Mammary epithelial cell (primary cell): ENCODE measurements at regions of chr3 and their contacts with region 1.

Region 1: GRCh38 chr3:50227390-50228183 is 8.4 kb upstream of the GNAI2 start:
- DNase-seq: peak; percentile 96
- H3K4me3 ChIP-seq: peak overlapping the region; percentile 58 to 60 (median 59)
- H3K27ac ChIP-seq: peak overlapping the region; percentile 52
- H3K4me1 ChIP-seq: peaks cover 20% of the 10 kb centered on the region
- H3K27me3 ChIP-seq: no peaks in the 10 kb centered on the region
- CTCF ChIP-seq: peak; percentile 43 to 74

Region 2: DNA sequence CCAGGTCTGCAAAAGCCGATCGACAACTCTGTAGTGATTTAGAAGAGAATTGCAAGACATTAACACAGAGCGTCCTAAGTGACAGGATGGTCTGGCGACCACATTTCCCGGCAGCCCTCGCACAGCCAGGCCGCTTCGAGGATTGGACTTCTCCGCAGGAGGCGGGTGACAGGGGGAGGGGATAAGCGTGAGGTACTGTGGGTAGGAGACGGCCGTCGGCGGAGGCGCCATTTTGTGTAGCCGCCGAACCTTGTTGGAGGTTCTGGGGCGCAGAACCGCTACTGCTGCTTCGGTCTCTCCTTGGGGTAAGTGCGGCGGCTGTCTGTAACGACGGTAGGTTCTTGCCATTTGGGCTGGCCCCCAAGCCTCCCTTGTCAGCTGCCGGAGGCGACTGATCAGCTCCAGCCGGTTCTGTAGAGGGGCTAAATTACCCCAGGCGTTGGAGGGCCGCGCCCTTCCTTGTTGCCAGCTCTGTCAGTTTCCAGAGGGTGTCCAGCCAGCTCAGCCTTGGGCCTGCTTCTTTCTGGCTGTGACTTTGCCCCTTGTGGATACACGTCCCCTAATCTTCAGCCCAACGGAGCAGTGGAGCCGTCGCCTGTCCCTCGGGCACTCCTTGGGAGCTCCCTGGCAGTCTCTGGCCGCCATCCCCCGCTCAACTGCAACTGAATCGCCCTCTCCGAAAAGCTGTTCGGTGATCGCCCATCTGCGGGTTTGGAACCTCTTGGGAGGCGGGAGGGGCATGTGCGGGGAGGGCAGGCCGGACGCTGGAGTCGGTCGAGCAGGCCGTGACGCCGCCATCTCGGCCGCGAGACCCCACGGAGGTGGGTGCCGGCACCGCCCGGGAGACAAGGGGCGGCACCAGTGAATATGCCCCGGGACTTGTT is 138.6 kb before region 1 on chr3 and contains the start of gene RBM5:
- CTCF ChIA-PET with region 1: no interaction called
- dilution Hi-C with region 1: no loop called
- in situ Hi-C with region 1: no loop called
- intact Hi-C with region 1: no loop called
- DNase-seq: peak; percentile 86
- H3K4me3 ChIP-seq: peak within 1 kb of the TSS; percentile 65 to 98 (median 96)
- H3K27ac ChIP-seq: peak within 1 kb of the TSS; percentile 90
- H3K4me1 ChIP-seq: peaks cover 18% of the 10 kb centered on the region
- H3K27me3 ChIP-seq: no peaks in the 10 kb centered on the region
- CTCF ChIP-seq: no peak
- total RNA-seq, gene RBM5: 105 to 116 TPM

Region 3: GRCh38 chr3:50121416-50122032 is 106.1 kb before region 1 on chr3:
- CTCF ChIA-PET with region 1: no interaction called
- dilution Hi-C with region 1: no loop called
- in situ Hi-C with region 1: no loop called
- intact Hi-C with region 1: loop called (anchors 1 kb)
- DNase-seq: peak; percentile 60
- H3K4me3 ChIP-seq: no peak overlapping the region
- H3K27ac ChIP-seq: no peak overlapping the region
- H3K4me1 ChIP-seq: peaks cover 13% of the 10 kb centered on the region
- H3K27me3 ChIP-seq: no peaks in the 10 kb centered on the region
- CTCF ChIP-seq: peak; percentile 74 to 84

Region 4: GRCh38 chr3:50154840-50155474 is 72.6 kb before region 1 on chr3 and contains the start of gene SEMA3F:
- CTCF ChIA-PET with region 1: no interaction called
- dilution Hi-C with region 1: no loop called
- in situ Hi-C with region 1: no loop called
- intact Hi-C with region 1: loop called (anchors 1 kb)
- DNase-seq: peak; percentile 81
- H3K4me3 ChIP-seq: peak within 1 kb of the TSS; percentile 69 to 84 (median 71)
- H3K27ac ChIP-seq: peak within 1 kb of the TSS; percentile 67
- H3K4me1 ChIP-seq: peaks cover 70% of the 10 kb centered on the region
- H3K27me3 ChIP-seq: no peaks in the 10 kb centered on the region
- CTCF ChIP-seq: no peak
- total RNA-seq, gene SEMA3F: 102 to 129 TPM

Region 5: GRCh38 chr3:50260027-50260941 is 32.7 kb after region 1 on chr3:
- CTCF ChIA-PET with region 1: interaction called, 7 read pairs
- dilution Hi-C with region 1: no loop called
- in situ Hi-C with region 1: no loop called
- intact Hi-C with region 1: loop called (anchors 1 kb)
- DNase-seq: peak; percentile 86
- H3K4me3 ChIP-seq: peak overlapping the region; percentile 32 to 52 (median 41)
- H3K27ac ChIP-seq: peak overlapping the region; percentile 54
- H3K4me1 ChIP-seq: peaks cover 35% of the 10 kb centered on the region
- H3K27me3 ChIP-seq: no peaks in the 10 kb centered on the region
- CTCF ChIP-seq: peak; percentile 77 to 91

Region 6: GRCh38 chr3:50321336-50322114 is 93.9 kb after region 1 on chr3:
- CTCF ChIA-PET with region 1: no interaction called
- dilution Hi-C with region 1: no loop called
- in situ Hi-C with region 1: no loop called
- intact Hi-C with region 1: loop called (anchors 1 kb)
- DNase-seq: peak; percentile 85
- H3K4me3 ChIP-seq: peak overlapping the region; percentile 43 to 72 (median 64)
- H3K27ac ChIP-seq: peak overlapping the region; percentile 98
- H3K4me1 ChIP-seq: peaks cover 46% of the 10 kb centered on the region
- H3K27me3 ChIP-seq: no peaks in the 10 kb centered on the region
- CTCF ChIP-seq: peak; percentile 1 to 48